Dendritic cell treated with granulocyte-macrophage colony-stimulating factor and Interleukin-4, amounts not matched to agents 40 ng/mL and 50 ng/mL, for 4 days (primary cell): ENCODE measurements at regions of chr17 and their contacts with region 1.

Region 1: GRCh38 chr17:57084802-57085447 is at the start of gene AKAP1:
- H3K4me3 Mint-ChIP-seq: peak within 1 kb of the TSS; percentile 91
- H3K27ac Mint-ChIP-seq: peak within 1 kb of the TSS; percentile 94
- H3K4me1 Mint-ChIP-seq: peaks cover 59% of the 10 kb centered on the region
- H3K27me3 Mint-ChIP-seq: no peaks in the 10 kb centered on the region

Region 2: DNA sequence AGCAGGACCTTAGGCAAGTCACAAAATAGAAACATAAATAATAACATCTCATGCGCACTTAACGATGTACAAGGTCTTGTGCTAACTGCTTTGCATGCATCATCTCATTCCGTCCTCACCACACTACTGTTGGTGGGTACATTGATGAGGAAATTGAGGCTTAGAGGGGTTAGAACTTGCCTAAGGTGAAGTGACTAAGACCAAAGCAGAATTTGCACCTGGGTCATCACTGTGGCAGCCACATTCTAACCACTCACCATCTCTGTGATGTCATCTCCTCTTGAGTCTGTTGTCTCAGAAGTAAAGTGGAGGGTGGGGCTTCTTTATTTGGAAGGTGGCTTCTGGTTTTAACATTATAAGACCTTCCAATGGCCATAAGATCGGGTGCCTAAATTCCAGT is 150.6 kb before region 1 on chr17:
- intact Hi-C with region 1: no loop called
- H3K4me3 Mint-ChIP-seq: no peak overlapping the region
- H3K27ac Mint-ChIP-seq: no peak overlapping the region
- H3K4me1 Mint-ChIP-seq: peaks cover 5% of the 10 kb centered on the region
- H3K27me3 Mint-ChIP-seq: no peaks in the 10 kb centered on the region

Region 3: GRCh38 chr17:56948491-56948890 is 136.4 kb before region 1 on chr17:
- intact Hi-C with region 1: no loop called
- H3K4me3 Mint-ChIP-seq: no peak overlapping the region
- H3K27ac Mint-ChIP-seq: no peak overlapping the region
- H3K4me1 Mint-ChIP-seq: no peaks in the 10 kb centered on the region
- H3K27me3 Mint-ChIP-seq: no peaks in the 10 kb centered on the region

Region 4: GRCh38 chr17:56977673-56978395 is 107.1 kb before region 1 on chr17 and contains the start of gene SCPEP1:
- intact Hi-C with region 1: loop called (anchors 10 kb)
- H3K4me3 Mint-ChIP-seq: peak within 1 kb of the TSS; percentile 96
- H3K27ac Mint-ChIP-seq: peak within 1 kb of the TSS; percentile 87
- H3K4me1 Mint-ChIP-seq: peaks cover 36% of the 10 kb centered on the region
- H3K27me3 Mint-ChIP-seq: no peaks in the 10 kb centered on the region

Region 5: GRCh38 chr17:57045868-57046704 is 38.8 kb before region 1 on chr17:
- intact Hi-C with region 1: loop called (anchors 5 kb)
- H3K4me3 Mint-ChIP-seq: peak overlapping the region; percentile 86
- H3K27ac Mint-ChIP-seq: peak overlapping the region; percentile 92
- H3K4me1 Mint-ChIP-seq: peaks cover 30% of the 10 kb centered on the region
- H3K27me3 Mint-ChIP-seq: peaks cover 56% of the 10 kb centered on the region